Common myeloid progenitor, CD34-positive (primary cell): ENCODE measurements at regions of chr2 and their contacts with region 1.

Region 1: DNA sequence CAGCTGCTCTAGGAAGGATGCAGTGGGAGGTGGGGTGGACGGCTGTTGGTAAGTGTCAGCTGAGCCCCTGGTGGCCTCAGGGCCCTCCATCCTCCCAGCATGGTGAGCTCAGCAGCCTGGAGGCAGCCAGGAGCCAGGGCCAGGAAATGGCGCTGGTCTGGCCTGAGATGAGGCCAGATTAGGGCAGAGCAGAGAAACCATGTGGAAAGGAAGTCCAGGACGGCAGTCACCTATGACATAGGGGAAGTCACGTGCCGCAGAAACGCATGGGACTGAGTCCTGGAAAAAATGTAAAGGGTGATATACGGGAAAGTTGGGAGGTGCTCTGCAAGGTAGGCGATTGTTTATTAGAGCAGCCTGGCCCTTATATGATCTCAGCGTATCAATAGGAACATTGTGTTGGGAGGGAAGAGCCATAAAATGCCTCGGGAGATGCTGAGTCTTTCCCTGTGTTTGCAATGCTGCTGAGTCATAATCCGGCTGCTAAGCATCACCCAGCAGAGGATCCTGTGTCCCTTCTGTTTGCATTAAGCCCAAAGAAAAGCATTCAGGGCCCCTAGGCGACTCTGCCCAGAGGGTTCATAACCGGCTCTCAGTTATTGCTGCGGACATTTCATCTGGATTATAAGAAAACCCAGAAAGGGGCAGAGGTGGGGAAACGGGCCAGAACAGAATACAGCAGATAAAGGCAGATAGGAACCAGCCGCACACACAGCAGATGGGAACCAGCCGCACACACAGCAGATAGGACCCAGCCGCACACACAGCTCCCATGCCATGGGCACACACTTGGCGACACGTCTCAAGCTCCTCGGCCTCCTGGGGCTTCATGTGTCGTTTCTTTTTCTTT is 30.3 kb upstream of the B3GNT7 start:
- DNase-seq: peak; percentile 20 to 57 (median 40)
- H3K4me3 ChIP-seq: no peak overlapping the region
- H3K27ac ChIP-seq: no peak overlapping the region
- H3K4me1 ChIP-seq: peaks cover 0 to 50% (median 28%) of the 10 kb centered on the region in 4 experiments
- H3K27me3 ChIP-seq: no peaks in the 10 kb centered on the region

Region 2: GRCh38 chr2:231394211-231395141 is 29.3 kb after region 1 on chr2:
- CTCF ChIA-PET with region 1: interaction called, 15 read pairs
- POLR2A ChIA-PET with region 1: no interaction called
- DNase-seq: no peak
- H3K4me3 ChIP-seq: peak overlapping the region in 1 of 7 experiments; percentile 4
- H3K27ac ChIP-seq: peak overlapping the region in 1 of 2 experiments; percentile 15
- H3K4me1 ChIP-seq: peaks cover 6 to 47% (median 41%) of the 10 kb centered on the region in 4 experiments
- H3K27me3 ChIP-seq: peaks cover 0 to 19% (median 6%) of the 10 kb centered on the region in 5 experiments